ENCODE measurements at regions of chr7 and their contacts with region 1.

Region 1: GRCh38 chr7:133252858-133253518 is at the start of gene EXOC4:
- DNase-seq: peak; percentile 97
- ATAC-seq: peak; percentile 99
- H3K4me3 ChIP-seq: peak within 1 kb of the TSS; percentile 99
- H3K27ac ChIP-seq: peak within 1 kb of the TSS; percentile 19; the same call in 1 of the 2 replicates
- H3K4me1 ChIP-seq: peaks cover 5% of the 10 kb centered on the region; the same call in 1 of the 2 replicates
- H3K27me3 ChIP-seq: no peaks in the 10 kb centered on the region
- CTCF ChIP-seq: no peak
- total RNA-seq, gene EXOC4: 43.5 and 45.8 TPM in 2 replicates

Region 2: GRCh38 chr7:133081599-133082389 is 171.2 kb before region 1 on chr7 and contains the start of gene CHCHD3:
- CTCF ChIA-PET with region 1: no interaction called
- POLR2A ChIA-PET with region 1: no interaction called
- intact Hi-C with region 1: loop called (anchors 1 kb)
- DNase-seq: peak; percentile 96
- ATAC-seq: peak; percentile 100
- H3K4me3 ChIP-seq: peak within 1 kb of the TSS; percentile 89
- H3K27ac ChIP-seq: peak within 1 kb of the TSS; percentile 43; the same call in 1 of the 2 replicates
- H3K4me1 ChIP-seq: no peaks in the 10 kb centered on the region
- H3K27me3 ChIP-seq: peaks cover 13% of the 10 kb centered on the region; the same call in 1 of the 2 replicates
- CTCF ChIP-seq: no peak
- total RNA-seq, gene CHCHD3: 139 and 149 TPM in 2 replicates

Region 3: GRCh38 chr7:133230591-133231194 is 22.3 kb before region 1 on chr7:
- CTCF ChIA-PET with region 1: no interaction called
- POLR2A ChIA-PET with region 1: no interaction called
- intact Hi-C with region 1: no loop called
- DNase-seq: peak; percentile 75
- ATAC-seq: peak; percentile 45
- H3K4me3 ChIP-seq: no peak overlapping the region
- H3K27ac ChIP-seq: no peak overlapping the region
- H3K4me1 ChIP-seq: no peaks in the 10 kb centered on the region
- H3K27me3 ChIP-seq: peaks cover 27% of the 10 kb centered on the region; the same call in 1 of the 2 replicates
- CTCF ChIP-seq: peak; percentile 86

Region 4: DNA sequence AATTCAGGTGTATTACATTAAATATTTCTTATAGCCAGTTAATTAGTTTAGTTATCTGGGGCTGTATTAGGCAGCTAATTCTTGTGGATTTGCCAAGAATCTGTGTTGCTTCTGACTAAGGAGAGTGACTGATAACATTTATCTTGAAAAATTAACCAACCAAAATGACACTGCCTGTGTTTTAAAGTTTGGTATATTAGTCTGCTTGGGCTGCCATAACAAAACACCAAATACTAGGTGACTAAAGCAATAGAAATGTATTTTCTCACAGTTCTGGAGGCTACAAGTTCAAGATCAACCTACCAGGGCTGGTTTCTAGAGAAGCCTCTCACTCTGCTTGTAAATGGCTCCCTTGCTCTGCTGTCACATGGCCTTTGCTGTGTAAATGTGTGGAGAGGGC is 12.8 kb after region 1 on chr7:
- CTCF ChIA-PET with region 1: no interaction called
- POLR2A ChIA-PET with region 1: interaction called, 10 read pairs
- intact Hi-C with region 1: no loop called
- DNase-seq: no peak
- ATAC-seq: no peak
- H3K4me3 ChIP-seq: no peak overlapping the region
- H3K27ac ChIP-seq: no peak overlapping the region
- H3K4me1 ChIP-seq: no peaks in the 10 kb centered on the region
- H3K27me3 ChIP-seq: no peaks in the 10 kb centered on the region
- CTCF ChIP-seq: no peak

Region 5: GRCh38 chr7:133290041-133290440 is 37.1 kb after region 1 on chr7:
- CTCF ChIA-PET with region 1: no interaction called
- POLR2A ChIA-PET with region 1: no interaction called
- intact Hi-C with region 1: no loop called
- DNase-seq: peak; percentile 25
- ATAC-seq: peak; percentile 57
- H3K4me3 ChIP-seq: no peak overlapping the region
- H3K27ac ChIP-seq: no peak overlapping the region
- H3K4me1 ChIP-seq: no peaks in the 10 kb centered on the region
- H3K27me3 ChIP-seq: no peaks in the 10 kb centered on the region
- CTCF ChIP-seq: no peak

Measured in PC-3 (cell line).